ENCODE measurements at regions of chr12 and their contacts with region 1.

Region 1: DNA sequence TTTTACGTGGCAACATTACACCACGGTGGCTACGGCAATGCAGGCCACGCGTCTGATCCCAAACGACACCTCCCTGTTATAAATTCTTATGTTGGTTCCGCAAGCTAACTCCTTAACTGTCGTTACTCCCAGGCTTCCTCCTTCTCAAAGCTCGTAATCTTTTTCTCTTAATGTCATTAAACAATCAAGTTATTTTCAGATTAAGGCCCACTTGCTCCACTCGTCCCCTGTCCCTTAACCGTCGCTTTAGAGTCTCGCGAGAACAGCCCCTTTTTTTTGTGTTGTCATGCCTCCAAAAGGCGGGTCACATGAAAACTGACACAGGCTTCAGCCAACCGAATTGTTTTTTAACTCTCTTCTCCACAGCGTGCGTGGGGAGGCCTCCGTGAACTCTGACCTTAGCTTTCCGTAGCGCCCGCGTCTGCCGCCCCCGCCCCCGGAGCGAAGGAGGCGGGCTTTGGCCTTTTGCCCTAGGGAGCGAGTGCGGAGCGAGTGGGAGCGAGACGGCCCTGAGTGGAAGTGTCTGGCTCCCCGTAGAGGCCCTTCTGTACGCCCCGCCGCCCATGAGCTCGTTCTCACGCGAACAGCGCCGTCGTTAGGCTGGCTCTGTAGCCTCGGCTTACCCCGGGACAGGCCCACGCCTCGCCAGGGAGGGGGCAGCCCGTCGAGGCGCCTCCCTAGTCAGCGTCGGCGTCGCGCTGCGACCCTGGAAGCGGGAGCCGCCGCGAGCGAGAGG is at the start of gene CAND1:
- DNase-seq: peak; percentile 97
- H3K4me3 Mint-ChIP-seq: peak within 1 kb of the TSS; percentile 89
- H3K27ac Mint-ChIP-seq: peak within 1 kb of the TSS; percentile 100
- H3K4me1 Mint-ChIP-seq: peaks cover 33% of the 10 kb centered on the region
- H3K27me3 Mint-ChIP-seq: no peaks in the 10 kb centered on the region
- total RNA-seq, gene CAND1: 221 to 224 TPM

Region 2: GRCh38 chr12:66130277-66131066 is 1138.6 kb before region 1 on chr12 and contains the start of gene LLPH:
- CTCF ChIA-PET with region 1: no interaction called
- intact Hi-C with region 1: loop called (anchors 2 kb)
- DNase-seq: peak; percentile 94
- H3K4me3 Mint-ChIP-seq: peak within 1 kb of the TSS; percentile 96
- H3K27ac Mint-ChIP-seq: peak within 1 kb of the TSS; percentile 95
- H3K4me1 Mint-ChIP-seq: peaks cover 53% of the 10 kb centered on the region
- H3K27me3 Mint-ChIP-seq: no peaks in the 10 kb centered on the region
- total RNA-seq, gene LLPH: 25.6 to 26.0 TPM

Region 3: DNA sequence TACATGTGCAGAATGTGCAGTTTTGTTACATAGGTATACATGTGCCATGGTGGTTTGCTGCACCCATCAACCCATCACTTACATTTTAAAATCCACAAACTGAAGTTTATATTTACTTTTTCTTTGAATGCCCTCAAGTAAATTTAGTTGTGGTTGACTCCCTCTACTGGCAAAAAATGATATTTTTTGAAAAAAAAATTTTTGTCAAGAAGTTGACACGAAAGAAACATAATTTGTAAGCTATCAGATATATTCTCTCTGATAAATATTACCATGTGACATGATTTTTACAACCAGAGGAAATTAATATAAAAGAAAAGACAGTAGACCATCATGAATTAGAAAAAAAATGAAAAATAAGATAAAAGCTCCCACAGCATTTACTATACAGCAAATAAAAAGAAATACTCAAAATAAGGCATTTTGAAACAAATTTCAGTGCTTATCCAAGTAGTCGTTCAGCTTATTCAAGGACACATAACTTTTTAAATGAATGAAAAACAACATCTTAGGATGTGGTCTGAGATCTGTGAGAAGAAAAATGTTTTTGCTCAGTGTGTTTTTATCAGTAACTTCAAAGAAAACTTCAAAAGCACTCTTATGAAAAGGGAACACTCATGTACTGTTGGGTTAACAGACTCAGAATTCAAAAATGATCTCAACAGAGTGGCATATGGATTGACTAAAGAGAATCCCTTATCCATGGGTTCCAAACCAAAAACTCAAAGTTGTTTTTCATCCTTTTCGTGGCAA is 560.2 kb before region 1 on chr12:
- CTCF ChIA-PET with region 1: no interaction called
- intact Hi-C with region 1: loop called (anchors 5 kb)
- DNase-seq: no peak
- H3K4me3 Mint-ChIP-seq: peak overlapping the region; percentile 32
- H3K27ac Mint-ChIP-seq: peak overlapping the region; percentile 7
- H3K4me1 Mint-ChIP-seq: peaks cover 33% of the 10 kb centered on the region
- H3K27me3 Mint-ChIP-seq: no peaks in the 10 kb centered on the region

Region 4: DNA sequence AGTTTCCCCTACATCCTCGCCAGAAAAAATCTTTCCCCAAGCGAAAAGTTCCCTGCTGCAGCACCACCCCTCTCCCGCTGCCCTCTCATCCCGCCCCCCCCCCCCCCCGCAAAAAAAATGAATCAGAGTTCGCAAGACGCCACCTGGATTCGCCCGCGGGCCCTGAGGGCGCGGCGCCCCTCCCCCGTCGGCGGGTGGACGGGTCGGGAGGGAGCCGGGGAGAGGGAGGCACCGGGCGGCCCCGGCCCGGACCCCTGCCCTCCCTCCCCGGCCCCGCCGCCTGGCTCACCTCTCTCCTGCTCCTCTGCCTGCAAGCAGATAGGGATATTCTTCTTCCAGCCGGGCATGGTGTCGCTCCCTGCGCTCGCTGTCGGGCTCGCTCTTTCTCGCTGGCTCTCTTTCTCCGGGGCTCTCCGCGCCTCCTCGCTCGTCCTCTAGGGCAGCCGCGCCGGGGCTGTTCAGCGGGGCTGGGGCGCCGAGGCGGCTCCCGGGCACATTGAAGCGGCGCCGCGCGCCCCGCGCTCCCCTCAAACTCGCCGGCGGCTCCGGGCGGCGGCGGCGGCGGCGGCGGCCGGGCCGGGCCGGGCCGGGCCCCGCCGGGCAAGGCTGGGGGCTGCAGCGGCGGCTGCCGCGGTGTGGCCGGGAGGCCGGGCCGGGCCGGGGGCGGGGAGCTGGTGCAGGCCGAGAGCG is 200.2 kb before region 1 on chr12:
- CTCF ChIA-PET with region 1: no interaction called
- intact Hi-C with region 1: loop called (anchors 2 kb)
- DNase-seq: peak; percentile 51
- H3K4me3 Mint-ChIP-seq: peak overlapping the region; percentile 91
- H3K27ac Mint-ChIP-seq: peak overlapping the region; percentile 72
- H3K4me1 Mint-ChIP-seq: peaks cover 25% of the 10 kb centered on the region
- H3K27me3 Mint-ChIP-seq: peaks cover 20% of the 10 kb centered on the region

Region 5: DNA sequence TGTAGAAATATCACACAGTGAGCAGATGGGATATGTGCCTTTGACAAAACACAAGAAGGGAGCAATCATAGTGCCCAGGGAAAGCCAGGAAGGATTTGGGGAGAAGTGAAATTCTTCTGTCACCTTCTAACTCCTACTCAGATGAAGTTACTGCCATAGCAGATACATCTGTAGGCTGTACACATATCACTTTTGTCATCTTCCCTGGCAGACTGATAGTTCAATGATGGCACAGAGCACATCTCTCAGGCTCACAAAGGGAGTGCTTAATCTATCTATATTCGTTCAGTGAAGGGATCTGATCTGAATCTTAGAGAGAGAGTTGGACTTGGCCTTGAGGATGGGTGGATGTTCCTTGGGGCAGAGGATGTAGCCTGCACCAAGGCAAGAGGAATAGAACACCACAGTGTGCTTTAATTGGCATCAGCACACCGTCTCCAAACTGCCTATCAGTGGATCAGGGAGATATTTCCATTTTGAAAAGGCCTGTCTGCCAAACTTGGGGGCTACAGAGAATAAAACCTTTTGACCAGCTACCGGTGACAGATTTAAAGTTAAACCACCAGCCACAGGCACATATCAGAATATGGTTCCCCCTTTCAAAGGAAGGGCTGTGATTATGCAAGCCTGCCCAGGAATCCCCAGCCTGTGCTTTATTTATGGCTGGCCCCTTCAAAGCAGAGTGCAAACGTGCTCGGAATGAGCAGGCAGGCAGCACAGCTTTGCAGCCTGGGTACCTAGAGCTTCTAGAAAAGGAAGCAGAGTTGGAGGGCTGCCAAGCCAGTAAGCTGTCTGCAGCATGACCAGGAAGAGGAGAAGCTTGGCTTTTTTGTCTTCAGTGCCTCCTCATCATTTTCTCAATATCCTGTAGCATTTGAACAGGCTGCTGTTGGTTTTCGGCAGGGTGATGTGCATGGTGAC is 213.9 kb after region 1 on chr12:
- CTCF ChIA-PET with region 1: no interaction called
- intact Hi-C with region 1: loop called (anchors 1 kb)
- DNase-seq: peak; percentile 95
- H3K4me3 Mint-ChIP-seq: no peak overlapping the region
- H3K27ac Mint-ChIP-seq: no peak overlapping the region
- H3K4me1 Mint-ChIP-seq: peaks cover 40% of the 10 kb centered on the region
- H3K27me3 Mint-ChIP-seq: no peaks in the 10 kb centered on the region

Region 6: GRCh38 chr12:67758119-67758518 is 489.1 kb after region 1 on chr12:
- CTCF ChIA-PET with region 1: no interaction called
- intact Hi-C with region 1: loop called (anchors 1 kb)
- DNase-seq: peak; percentile 9
- H3K4me3 Mint-ChIP-seq: no peak overlapping the region
- H3K27ac Mint-ChIP-seq: no peak overlapping the region
- H3K4me1 Mint-ChIP-seq: peaks cover 49% of the 10 kb centered on the region
- H3K27me3 Mint-ChIP-seq: no peaks in the 10 kb centered on the region

Region 7: GRCh38 chr12:68040450-68041075 is 771.5 kb after region 1 on chr12:
- CTCF ChIA-PET with region 1: no interaction called
- intact Hi-C with region 1: no loop called
- DNase-seq: peak; percentile 83
- H3K4me3 Mint-ChIP-seq: no peak overlapping the region
- H3K27ac Mint-ChIP-seq: peak overlapping the region; percentile 29
- H3K4me1 Mint-ChIP-seq: peaks cover 42% of the 10 kb centered on the region
- H3K27me3 Mint-ChIP-seq: no peaks in the 10 kb centered on the region

Region 8: DNA sequence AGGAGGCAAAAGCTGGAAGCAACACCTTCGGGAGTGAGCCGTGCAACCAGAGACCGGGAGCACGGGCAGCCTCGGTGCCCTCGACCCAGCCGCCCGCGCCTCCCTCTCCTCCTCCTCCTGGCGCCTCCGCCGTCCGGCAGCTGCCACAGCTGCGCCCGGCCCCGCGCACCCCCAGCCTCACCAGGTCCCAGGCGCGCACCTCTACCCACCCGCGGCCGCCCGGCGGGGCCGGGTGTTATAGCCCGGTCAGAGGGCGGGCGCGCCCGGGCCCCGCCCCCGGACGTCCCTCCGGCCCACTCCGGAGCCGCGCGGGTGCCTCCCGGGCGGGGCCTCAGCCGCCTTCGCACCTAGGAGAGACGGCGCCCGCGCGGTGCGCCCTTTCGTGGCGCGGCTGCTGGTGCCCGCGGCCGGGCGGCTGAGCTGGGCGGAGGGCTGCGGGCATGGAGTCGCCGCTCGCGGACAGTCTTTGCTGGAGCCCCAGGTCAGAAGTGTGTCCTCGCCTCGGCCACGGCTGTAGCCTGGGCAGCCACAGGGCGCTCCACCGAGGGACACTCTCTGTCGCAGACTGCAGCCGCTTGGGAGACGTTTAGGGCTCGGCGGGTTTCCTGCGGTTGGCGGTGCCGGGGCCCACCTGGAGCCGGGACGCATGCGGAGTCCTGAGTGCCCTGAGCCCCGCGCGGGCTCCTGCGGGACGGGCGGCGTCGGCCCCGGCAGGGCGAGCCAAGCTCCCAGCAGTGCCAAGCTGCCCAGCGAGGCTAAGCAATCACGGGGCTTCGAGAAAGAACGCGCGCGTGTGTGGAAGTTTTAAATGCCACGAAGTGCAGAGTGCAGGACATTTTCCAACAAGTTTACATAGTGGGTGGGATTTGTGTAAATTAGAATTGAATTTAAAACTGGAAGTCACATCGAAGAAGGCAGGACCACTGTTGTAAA is 1664.2 kb after region 1 on chr12 and contains the start of gene CPM:
- CTCF ChIA-PET with region 1: no interaction called
- intact Hi-C with region 1: loop called (anchors 10 kb)
- DNase-seq: peak; percentile 76
- H3K4me3 Mint-ChIP-seq: peak within 1 kb of the TSS; percentile 82
- H3K27ac Mint-ChIP-seq: peak within 1 kb of the TSS; percentile 58
- H3K4me1 Mint-ChIP-seq: peaks cover 21% of the 10 kb centered on the region
- H3K27me3 Mint-ChIP-seq: peaks cover 22% of the 10 kb centered on the region
- total RNA-seq, gene CPM: 50.5 to 55.1 TPM